ENCODE measurements at regions of chr21 and their contacts with region 1.

Region 1: GRCh38 chr21:31580866-31581276 is 78.6 kb upstream of the SOD1 start:
- H3K4me3 ChIP-seq: no peak overlapping the region
- H3K27ac ChIP-seq: no peak overlapping the region
- H3K4me1 ChIP-seq: no peaks in the 10 kb centered on the region
- CTCF ChIP-seq: peak; percentile 57; the same call in 1 of the 2 replicates

Region 2: DNA sequence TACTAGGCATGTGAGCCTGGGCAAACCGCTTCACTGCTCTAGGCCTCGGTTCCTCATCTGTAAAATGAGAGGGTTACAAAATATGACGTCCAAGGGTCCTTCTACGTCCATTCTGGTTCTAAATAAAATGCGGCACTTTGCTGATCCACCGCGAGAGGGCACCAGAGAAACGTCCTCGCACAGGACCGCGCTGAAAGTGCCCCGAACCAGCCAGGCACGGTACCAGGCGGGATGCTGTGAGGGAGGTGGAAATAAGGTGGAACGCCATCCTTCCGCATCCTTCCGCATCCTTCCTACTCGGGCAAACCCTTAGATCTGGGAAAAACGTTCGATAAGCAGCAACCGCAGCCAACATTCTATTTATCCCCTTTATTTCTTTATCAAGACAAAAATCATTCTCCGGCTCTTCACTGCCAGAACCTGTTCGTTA is 482.3 kb before region 1 on chr21:
- CTCF ChIA-PET with region 1: interaction called, 18 read pairs
- POLR2A ChIA-PET with region 1: no interaction called
- H3K4me3 ChIP-seq: no peak overlapping the region
- H3K27ac ChIP-seq: no peak overlapping the region
- H3K4me1 ChIP-seq: no peaks in the 10 kb centered on the region
- CTCF ChIP-seq: peak; percentile 71; the same call in 1 of the 2 replicates

Region 3: GRCh38 chr21:31213795-31214194 is 367.1 kb before region 1 on chr21:
- CTCF ChIA-PET with region 1: interaction called, 11 read pairs
- POLR2A ChIA-PET with region 1: no interaction called
- H3K4me3 ChIP-seq: no peak overlapping the region
- H3K27ac ChIP-seq: no peak overlapping the region
- H3K4me1 ChIP-seq: no peaks in the 10 kb centered on the region
- CTCF ChIP-seq: no peak; the same call in 1 of the 2 replicates

Region 4: DNA sequence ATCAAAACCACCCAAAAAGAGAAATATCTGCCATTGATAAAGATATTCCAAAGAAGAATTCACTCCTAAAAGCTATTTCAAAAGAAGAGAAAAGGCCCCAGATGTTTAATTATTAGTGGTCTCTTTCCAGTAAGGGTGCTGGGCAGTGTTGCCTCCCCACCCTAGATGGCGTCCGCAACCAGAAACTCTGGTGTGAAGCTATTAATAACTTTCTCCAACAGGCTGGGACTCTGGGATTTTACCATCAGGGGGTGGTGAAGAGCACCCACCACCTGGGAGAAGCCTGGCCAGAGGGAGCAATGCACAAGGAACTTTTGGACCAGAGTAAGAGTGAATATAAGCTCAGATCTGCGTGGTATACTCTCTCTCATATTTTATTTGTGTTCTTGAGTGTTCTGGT is 121.4 kb before region 1 on chr21:
- CTCF ChIA-PET with region 1: interaction called, 32 read pairs
- POLR2A ChIA-PET with region 1: no interaction called
- H3K4me3 ChIP-seq: no peak overlapping the region
- H3K27ac ChIP-seq: no peak overlapping the region
- H3K4me1 ChIP-seq: no peaks in the 10 kb centered on the region; the same call in 1 of the 2 replicates
- CTCF ChIP-seq: peak; percentile 54

Region 5: DNA sequence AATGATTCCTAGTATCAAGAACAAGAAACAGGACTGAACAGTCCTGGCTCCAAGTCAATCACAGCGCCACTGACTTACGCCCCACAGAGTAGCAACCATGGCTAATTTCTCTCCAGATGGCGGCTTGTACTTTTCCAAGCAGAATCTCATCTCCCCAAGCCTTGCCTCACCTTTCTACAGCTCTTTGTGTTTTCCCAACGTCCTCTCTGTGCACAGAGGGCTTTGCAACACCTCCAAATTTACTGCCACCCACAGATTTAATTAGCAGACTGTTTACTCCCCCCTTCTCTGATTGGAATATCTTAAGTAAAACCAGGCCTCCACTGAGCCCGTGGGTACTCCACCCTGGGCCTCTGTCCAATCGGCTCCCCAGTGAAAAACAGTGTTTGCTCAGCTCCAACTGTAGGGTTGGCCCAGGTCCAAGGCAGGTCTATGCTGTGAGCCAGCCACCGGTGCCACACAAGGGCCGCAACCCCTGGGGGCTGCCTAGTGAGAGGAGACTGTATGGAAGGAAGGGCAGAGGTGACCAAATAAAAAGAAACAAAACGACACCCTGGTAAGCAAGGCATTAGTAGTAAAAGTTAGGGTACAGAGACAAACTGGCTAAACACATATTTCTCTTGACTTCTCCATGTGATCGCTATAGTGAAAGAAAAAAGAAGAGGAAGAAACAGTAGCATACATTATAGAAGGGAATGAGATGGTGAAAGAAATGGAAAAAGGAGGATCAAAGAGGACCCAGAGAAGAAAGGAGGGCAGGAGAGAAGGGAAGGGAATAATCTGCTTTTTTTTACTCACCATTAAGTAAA is 49.8 kb before region 1 on chr21:
- CTCF ChIA-PET with region 1: interaction called, 10 read pairs
- POLR2A ChIA-PET with region 1: no interaction called
- H3K4me3 ChIP-seq: no peak overlapping the region
- H3K27ac ChIP-seq: peak overlapping the region; percentile 68
- H3K4me1 ChIP-seq: peaks cover 32% of the 10 kb centered on the region
- CTCF ChIP-seq: no peak

Region 6: DNA sequence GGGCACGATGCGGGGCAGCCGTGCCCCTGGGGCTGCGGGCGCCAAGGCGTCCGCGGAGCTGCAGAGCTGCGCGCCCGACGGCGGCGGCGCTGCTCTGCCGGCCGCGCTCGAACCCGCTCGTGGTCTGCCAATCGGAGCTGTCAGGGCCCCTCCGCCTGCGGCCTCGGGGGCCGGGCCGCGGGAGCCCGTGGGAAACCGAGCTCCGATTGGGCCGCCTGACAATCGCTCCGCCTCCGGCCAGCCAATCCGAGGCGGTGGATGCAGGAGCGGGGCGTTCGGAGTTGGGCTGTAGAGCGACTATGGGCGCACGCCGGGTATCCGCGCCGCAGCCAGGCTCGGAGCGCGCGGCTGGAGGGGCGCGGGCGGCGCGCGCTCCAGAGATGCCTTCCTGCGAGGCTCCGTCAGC is 21.9 kb before region 1 on chr21:
- CTCF ChIA-PET with region 1: interaction called, 19 read pairs
- POLR2A ChIA-PET with region 1: interaction called, 8 read pairs
- H3K4me3 ChIP-seq: peak overlapping the region; percentile 75
- H3K27ac ChIP-seq: peak overlapping the region; percentile 91
- H3K4me1 ChIP-seq: peaks cover 38% of the 10 kb centered on the region
- CTCF ChIP-seq: no peak

Region 7: GRCh38 chr21:31604591-31605190 is 23.8 kb after region 1 on chr21:
- CTCF ChIA-PET with region 1: interaction called, 37 read pairs
- POLR2A ChIA-PET with region 1: no interaction called
- H3K4me3 ChIP-seq: no peak overlapping the region
- H3K27ac ChIP-seq: no peak overlapping the region
- H3K4me1 ChIP-seq: no peaks in the 10 kb centered on the region
- CTCF ChIP-seq: peak; percentile 74; the same call in 1 of the 2 replicates